Activated B cell treated with CpG ODN at 0.5 μM for 24 hours (primary cell): ENCODE measurements at regions of chr5 and their contacts with region 1.

Region 1: DNA sequence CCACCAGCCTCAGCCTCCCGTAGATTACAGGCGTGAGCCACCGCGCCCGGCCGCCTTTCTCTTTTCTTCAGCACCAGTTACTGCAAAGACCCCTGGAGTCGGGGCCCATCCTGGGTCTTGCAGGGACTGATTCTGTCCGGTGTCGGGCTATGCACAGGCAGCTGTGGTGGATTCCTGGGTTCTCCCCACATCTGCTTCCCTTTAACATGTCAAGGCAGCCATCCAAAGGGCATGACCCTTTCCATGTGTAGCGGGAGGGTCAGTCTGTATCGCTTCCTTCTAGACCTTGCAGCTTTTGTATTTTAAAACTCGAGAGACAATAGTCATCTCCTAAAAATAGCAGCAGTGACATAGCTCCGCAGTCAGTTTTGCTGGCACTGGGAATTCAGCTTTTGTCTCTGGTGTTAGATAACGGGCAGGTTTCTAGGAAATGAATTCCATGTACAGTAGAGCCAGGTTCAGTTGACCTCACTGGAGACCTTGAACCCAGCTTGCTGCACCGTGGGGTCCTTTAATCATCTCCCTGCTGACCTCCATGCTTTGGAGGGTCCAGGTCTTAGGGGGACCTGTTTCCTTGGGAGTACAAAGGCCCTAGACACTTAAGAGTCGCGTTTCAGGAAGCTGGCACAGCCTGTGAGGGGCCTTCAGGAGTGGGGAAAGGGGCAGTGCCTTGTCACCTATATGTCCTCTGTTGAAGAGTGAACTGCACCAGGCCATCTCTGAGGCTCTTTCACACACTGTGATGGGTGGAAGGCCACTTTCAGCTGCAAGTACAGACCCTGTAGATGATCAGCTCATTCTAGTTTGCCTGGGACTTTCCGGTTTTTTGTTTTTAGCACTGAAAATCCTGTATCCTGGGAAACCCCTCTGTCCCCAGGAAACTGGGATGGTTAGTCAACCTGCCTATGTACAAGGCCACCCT is 13.8 kb downstream of the ANKRD33B start:
- DNase-seq: no peak
- ATAC-seq: no peak
- H3K4me3 Mint-ChIP-seq: peak overlapping the region; percentile 83
- H3K27ac Mint-ChIP-seq: peak overlapping the region; percentile 81
- H3K4me1 Mint-ChIP-seq: peaks cover 85% of the 10 kb centered on the region
- H3K27me3 Mint-ChIP-seq: no peaks in the 10 kb centered on the region
- CTCF ChIP-seq: no peak

Region 2: GRCh38 chr5:9686211-9686610 is 891.4 kb before region 1 on chr5:
- CTCF ChIA-PET with region 1: no interaction called
- POLR2A ChIA-PET with region 1: no interaction called
- intact Hi-C with region 1: no loop called
- DNase-seq: no peak
- ATAC-seq: no peak
- H3K4me3 Mint-ChIP-seq: no peak overlapping the region
- H3K27ac Mint-ChIP-seq: no peak overlapping the region
- H3K4me1 Mint-ChIP-seq: no peaks in the 10 kb centered on the region
- H3K27me3 Mint-ChIP-seq: no peaks in the 10 kb centered on the region
- CTCF ChIP-seq: no peak

Region 3: DNA sequence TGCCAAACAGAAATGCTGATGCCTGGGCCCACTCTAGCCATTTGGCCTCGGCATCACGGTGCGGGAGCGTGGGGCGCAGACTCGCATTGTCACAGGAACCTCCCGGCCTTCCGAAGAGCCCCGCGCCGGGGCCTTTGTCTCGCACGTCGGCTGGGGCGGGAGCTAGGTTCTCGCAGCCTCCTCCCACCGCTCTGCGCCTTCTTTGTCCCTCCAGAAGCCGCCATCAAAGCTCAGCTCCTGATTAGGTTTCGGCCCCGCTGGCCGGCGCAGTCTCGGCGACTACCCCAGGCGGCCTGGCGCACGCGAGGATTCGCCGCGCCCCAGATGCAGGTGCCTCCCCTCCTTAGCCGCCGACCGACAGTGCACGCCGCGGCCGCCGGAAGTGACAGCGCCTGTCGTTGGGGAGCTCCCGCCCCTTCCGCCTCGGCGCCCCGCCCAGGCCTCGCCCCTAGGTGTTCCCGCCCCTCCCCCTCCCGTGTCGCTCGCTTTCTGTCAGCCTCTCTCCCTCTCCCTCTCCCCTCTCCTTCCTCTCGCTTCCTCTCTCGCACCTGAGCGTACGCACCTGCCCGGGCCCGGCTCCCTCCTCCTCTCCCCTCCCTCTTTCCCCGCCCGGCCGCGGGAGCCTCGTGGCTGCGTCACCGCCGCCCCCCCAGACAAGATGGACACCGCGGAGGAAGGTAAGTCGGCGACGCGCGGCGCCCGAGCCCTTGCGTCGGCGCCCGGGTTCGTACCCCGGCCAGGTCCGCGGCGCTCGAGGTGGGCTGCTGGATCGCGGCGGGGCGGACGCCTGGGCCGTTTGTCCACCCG is 224.2 kb before region 1 on chr5 and contains the start of gene MARCHF6:
- CTCF ChIA-PET with region 1: no interaction called
- POLR2A ChIA-PET with region 1: interaction called, 4 read pairs
- intact Hi-C with region 1: loop called (anchors 1 kb)
- DNase-seq: peak; percentile 94
- ATAC-seq: peak; percentile 77
- H3K4me3 Mint-ChIP-seq: peak within 1 kb of the TSS; percentile 98
- H3K27ac Mint-ChIP-seq: peak within 1 kb of the TSS; percentile 98
- H3K4me1 Mint-ChIP-seq: peaks cover 49% of the 10 kb centered on the region
- H3K27me3 Mint-ChIP-seq: no peaks in the 10 kb centered on the region
- CTCF ChIP-seq: no peak
- total RNA-seq, gene MARCHF6: 116 and 124 TPM in 2 replicates

Region 4: GRCh38 chr5:10489810-10490426 is 87.7 kb before region 1 on chr5:
- CTCF ChIA-PET with region 1: interaction called, 5 read pairs
- POLR2A ChIA-PET with region 1: no interaction called
- intact Hi-C with region 1: loop called (anchors 1 kb)
- DNase-seq: no peak
- ATAC-seq: peak; percentile 98
- H3K4me3 Mint-ChIP-seq: peak overlapping the region; percentile 58
- H3K27ac Mint-ChIP-seq: peak overlapping the region; percentile 56
- H3K4me1 Mint-ChIP-seq: peaks cover 47% of the 10 kb centered on the region
- H3K27me3 Mint-ChIP-seq: no peaks in the 10 kb centered on the region
- CTCF ChIP-seq: no peak

Region 5: GRCh38 chr5:10536931-10537579 is 40.6 kb before region 1 on chr5:
- CTCF ChIA-PET with region 1: no interaction called
- POLR2A ChIA-PET with region 1: interaction called, 3 read pairs
- intact Hi-C with region 1: loop called (anchors 1 kb)
- DNase-seq: no peak
- ATAC-seq: peak; percentile 79
- H3K4me3 Mint-ChIP-seq: peak overlapping the region; percentile 76
- H3K27ac Mint-ChIP-seq: peak overlapping the region; percentile 75
- H3K4me1 Mint-ChIP-seq: peaks cover 26% of the 10 kb centered on the region
- H3K27me3 Mint-ChIP-seq: peaks cover 2% of the 10 kb centered on the region
- CTCF ChIP-seq: no peak

Region 6: DNA sequence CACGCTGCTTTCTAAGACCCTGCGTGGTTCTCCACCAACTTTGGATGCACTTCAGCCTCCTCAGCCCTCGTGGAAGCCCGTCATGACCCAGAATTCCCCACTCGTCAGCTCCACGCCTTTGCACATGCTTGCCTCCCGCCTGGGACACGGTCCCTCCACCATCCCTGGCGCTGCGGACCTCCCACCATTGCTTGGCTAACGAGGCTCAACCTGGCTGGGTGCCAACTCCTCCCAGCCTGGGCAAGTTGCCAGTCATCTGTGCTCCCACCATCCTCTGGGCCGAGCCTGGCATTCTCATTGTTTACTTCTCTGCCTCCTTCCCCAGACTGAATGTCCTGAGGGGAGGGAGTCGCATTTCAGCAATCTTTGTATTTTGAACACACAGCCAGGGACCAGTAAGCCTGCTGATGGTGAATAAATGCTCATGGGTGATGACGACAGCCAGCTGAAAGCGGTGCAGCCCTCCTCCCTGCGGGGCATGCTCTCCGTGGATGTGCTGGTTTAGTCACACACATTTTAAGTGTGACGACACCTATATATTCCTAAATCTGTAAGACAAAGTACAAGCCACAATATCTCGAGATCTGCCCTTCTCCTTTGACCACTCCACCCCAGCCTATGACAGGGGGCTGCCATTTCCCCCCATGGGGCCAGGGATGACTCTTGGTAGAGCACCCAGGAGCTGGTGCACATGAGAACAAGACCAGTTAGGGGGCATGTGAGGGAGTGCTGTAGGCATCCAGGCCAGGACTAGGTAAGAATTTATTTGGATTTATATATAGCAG is 23.8 kb after region 1 on chr5:
- CTCF ChIA-PET with region 1: interaction called, 3 read pairs
- POLR2A ChIA-PET with region 1: interaction called, 19 read pairs
- intact Hi-C with region 1: loop called (anchors 1 kb)
- DNase-seq: no peak
- ATAC-seq: peak; percentile 63
- H3K4me3 Mint-ChIP-seq: peak overlapping the region; percentile 72
- H3K27ac Mint-ChIP-seq: peak overlapping the region; percentile 84
- H3K4me1 Mint-ChIP-seq: peaks cover 66% of the 10 kb centered on the region
- H3K27me3 Mint-ChIP-seq: no peaks in the 10 kb centered on the region
- CTCF ChIP-seq: no peak

Region 7: DNA sequence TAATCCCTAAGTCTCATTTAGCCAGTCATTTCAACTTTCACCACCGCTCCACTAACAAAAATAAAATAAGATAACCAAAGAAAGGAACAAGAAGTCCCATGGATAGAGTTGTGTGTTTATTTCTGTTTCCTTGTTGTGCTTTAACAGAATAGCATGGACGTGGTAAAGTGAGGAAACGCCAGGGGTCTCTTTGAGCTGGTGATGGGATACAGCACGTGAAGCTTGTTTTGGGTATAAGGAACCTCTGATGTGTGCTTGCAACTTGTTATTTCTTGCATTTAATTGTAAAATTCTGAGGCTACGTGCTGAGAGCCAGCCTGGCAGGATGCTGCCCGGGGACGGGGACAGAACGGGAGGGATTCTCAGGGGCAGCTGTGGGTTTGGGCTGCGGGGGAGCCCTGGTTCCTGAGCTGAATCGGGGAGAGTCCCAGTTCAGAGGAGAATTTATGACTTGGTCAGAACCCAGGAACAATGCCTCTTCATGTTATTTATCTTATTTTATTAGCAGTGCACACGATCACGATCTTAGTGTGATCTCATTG is 49.6 kb after region 1 on chr5:
- CTCF ChIA-PET with region 1: interaction called, 9 read pairs
- POLR2A ChIA-PET with region 1: interaction called, 12 read pairs
- intact Hi-C with region 1: loop called (anchors 1 kb)
- DNase-seq: no peak
- ATAC-seq: no peak
- H3K4me3 Mint-ChIP-seq: peak overlapping the region; percentile 80
- H3K27ac Mint-ChIP-seq: peak overlapping the region; percentile 85
- H3K4me1 Mint-ChIP-seq: peaks cover 68% of the 10 kb centered on the region
- H3K27me3 Mint-ChIP-seq: no peaks in the 10 kb centered on the region
- CTCF ChIP-seq: no peak

Region 8: GRCh38 chr5:10645146-10645545 is 67.5 kb after region 1 on chr5:
- CTCF ChIA-PET with region 1: no interaction called
- POLR2A ChIA-PET with region 1: interaction called, 11 read pairs
- intact Hi-C with region 1: no loop called
- DNase-seq: peak; percentile 11
- ATAC-seq: peak; percentile 70
- H3K4me3 Mint-ChIP-seq: no peak overlapping the region
- H3K27ac Mint-ChIP-seq: peak overlapping the region; percentile 4
- H3K4me1 Mint-ChIP-seq: peaks cover 57% of the 10 kb centered on the region
- H3K27me3 Mint-ChIP-seq: no peaks in the 10 kb centered on the region
- CTCF ChIP-seq: no peak

Region 9: DNA sequence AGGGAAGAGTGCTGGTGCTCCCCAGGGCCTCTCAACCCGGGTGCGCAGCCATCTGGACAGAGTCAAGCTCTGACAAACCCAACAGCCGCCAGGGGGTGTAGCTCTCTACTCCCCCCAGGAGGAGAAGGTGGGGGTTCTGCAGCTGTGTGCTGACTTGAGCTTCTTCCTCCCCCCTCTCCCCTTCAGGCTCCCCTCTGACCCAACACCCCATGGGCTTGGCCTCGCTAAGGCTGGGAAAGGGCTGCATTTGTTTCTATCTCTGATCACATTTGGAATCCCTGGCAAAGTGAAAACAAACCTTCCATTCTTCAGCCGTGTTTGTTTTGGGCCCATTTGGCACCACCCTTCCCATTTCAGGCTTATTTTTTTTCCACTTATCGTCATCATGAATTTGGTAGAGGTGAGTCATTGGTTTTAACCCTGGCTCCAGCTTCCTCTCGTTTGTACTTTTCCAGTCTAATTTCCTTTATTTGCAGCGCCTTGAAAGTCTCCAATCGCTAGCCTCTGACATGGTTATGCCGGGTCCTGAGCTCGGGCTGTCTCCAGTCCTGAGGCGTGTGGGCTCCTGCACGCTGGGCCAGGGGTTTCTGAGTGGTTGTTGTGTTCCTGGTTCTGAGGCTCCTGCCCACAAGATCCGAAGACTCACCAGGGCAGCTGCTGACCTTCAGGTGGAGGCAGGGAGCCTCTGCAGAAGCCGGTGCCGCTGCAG is 147.3 kb after region 1 on chr5:
- CTCF ChIA-PET with region 1: no interaction called
- POLR2A ChIA-PET with region 1: no interaction called
- intact Hi-C with region 1: no loop called
- DNase-seq: no peak
- ATAC-seq: no peak
- H3K4me3 Mint-ChIP-seq: no peak overlapping the region
- H3K27ac Mint-ChIP-seq: no peak overlapping the region
- H3K4me1 Mint-ChIP-seq: peaks cover 25% of the 10 kb centered on the region
- H3K27me3 Mint-ChIP-seq: no peaks in the 10 kb centered on the region
- CTCF ChIP-seq: no peak